ENCODE measurements at regions of chr6 and their contacts with region 1.

Region 1: DNA sequence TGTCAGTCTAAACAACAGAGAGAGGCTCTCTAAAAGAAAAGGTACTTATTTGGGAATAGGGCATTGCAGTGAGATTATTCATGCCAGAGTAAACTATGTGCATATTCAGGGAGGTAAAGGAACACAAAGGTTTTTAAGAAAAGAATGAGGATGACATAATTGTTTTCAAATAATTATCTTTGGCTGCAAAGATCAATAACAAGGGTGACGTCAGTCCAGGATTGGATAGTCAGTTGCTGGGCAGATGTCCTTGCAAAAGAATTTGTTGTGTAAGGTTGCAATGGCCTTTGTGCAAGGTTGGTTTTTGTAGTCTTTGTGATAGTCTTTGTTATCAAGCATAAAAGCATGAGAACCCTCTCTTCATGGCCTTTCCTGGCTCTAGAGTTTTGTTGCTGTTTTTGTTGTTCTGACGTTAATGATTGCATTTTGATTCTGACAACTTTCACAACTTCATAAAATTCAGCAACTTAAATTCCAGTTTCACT is 17.7 kb downstream of the LOC128125822 start:
- DNase-seq: no peak
- H3K4me3 ChIP-seq: no peak overlapping the region
- H3K27ac ChIP-seq: no peak overlapping the region
- H3K4me1 ChIP-seq: no peaks in the 10 kb centered on the region
- H3K27me3 ChIP-seq: no peaks in the 10 kb centered on the region
- CTCF ChIP-seq: no peak

Region 2: GRCh38 chr6:63663147-63663877 is 73.3 kb after region 1 on chr6:
- CTCF ChIA-PET with region 1: no interaction called
- POLR2A ChIA-PET with region 1: interaction called, 12 read pairs
- intact Hi-C with region 1: no loop called
- DNase-seq: peak; percentile 12
- H3K4me3 ChIP-seq: no peak overlapping the region
- H3K27ac ChIP-seq: no peak overlapping the region
- H3K4me1 ChIP-seq: peaks cover 4% of the 10 kb centered on the region
- H3K27me3 ChIP-seq: no peaks in the 10 kb centered on the region
- CTCF ChIP-seq: no peak

Measured in A673 (cell line).